Endothelial cell of umbilical vein (primary cell): ENCODE measurements at regions of chr12 and their contacts with region 1.

Region 1: DNA sequence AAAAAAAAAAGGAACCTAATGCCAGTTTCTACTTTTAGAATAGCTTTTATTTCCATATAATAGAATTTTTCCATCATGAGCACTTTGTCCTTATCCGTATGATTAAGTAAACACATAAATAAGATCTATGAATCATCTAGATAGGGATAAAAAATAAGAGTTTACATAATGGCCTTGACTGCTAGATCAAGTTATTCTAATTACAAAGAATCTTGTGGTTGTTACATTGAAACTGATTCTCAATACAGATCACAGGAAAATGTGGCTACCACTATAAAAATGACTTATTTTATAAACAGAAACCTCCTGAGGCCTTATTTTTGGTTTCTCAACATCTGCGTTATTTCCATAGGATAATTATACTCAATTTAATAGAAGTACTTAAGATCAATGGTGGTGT is 34.4 kb upstream of the NDUFA12 start:
- DNase-seq: no peak
- H3K4me3 ChIP-seq: no peak overlapping the region
- H3K27ac ChIP-seq: no peak overlapping the region
- H3K4me1 ChIP-seq: peaks cover 8% of the 10 kb centered on the region
- H3K27me3 ChIP-seq: no peaks in the 10 kb centered on the region
- CTCF ChIP-seq: no peak
- POLR2A ChIP-seq: no peak

Region 2: DNA sequence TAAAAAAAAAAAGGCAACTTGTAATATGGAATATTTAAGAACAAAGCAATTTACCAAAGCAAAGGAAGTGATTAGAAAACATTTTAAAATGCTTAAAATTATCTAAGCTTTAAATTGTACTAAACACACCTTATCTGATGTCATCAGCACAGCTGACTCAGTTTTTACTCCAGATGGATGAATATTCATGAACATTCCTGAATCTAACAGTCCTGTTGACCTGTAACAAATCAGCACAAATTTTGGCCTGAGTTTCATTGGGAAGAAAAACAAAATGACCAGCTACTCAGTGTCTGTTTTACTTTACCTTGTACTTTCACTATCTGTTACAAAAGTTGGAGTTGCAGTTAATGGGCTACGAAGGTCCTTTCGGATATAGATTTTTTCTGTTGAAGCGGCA is 19.5 kb after region 1 on chr12:
- CTCF ChIA-PET with region 1: no interaction called
- POLR2A ChIA-PET with region 1: interaction called, 15 read pairs
- dilution Hi-C with region 1: no loop called
- intact Hi-C with region 1: no loop called
- DNase-seq: no peak
- H3K4me3 ChIP-seq: no peak overlapping the region
- H3K27ac ChIP-seq: no peak overlapping the region
- H3K4me1 ChIP-seq: no peaks in the 10 kb centered on the region
- H3K27me3 ChIP-seq: no peaks in the 10 kb centered on the region
- CTCF ChIP-seq: no peak
- POLR2A ChIP-seq: no peak